Panc1 (cell line): ENCODE measurements at regions of chr17 and their contacts with region 1.

Region 1: GRCh38 chr17:63919311-63919723 is 678 bp upstream of the GH1 start:
- DNase-seq: peak; percentile 72
- ATAC-seq: peak; percentile 93
- H3K4me3 ChIP-seq: no peak overlapping the region
- H3K27ac ChIP-seq: no peak overlapping the region
- H3K4me1 ChIP-seq: no peaks in the 10 kb centered on the region
- H3K27me3 ChIP-seq: no peaks in the 10 kb centered on the region
- CTCF ChIP-seq: peak; percentile 86

Region 2: DNA sequence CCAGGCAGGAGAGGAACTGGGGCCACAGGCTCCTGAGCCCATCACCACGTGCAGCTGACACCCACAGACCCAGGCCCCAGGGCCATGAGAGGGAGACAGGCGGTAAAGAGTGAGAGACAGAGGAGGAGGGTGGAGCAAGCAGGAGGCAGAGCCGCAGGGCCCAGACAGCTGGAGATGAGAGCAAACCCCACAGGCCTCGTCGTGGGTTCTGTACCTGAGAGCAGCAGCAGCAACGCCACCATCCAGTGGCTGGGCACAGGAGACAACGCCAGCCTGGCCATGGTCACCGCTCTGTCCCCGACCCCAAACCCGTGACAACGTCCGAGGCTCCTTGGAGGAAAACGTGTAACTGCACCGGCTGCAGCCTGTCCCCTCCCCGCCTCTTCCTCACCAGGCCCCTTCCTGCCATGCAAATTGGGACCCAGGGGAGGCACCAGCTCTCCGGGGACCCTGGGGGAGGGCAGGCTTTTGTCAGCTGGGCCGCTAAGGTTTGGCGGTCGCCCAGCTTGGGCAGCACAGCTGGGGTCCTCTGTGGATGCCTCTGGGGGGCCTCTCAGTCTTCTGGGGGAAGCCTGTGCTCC is 12.8 kb after region 1 on chr17 and contains the start of gene CD79B:
- CTCF ChIA-PET with region 1: interaction called, 5 read pairs
- POLR2A ChIA-PET with region 1: interaction called, 10 read pairs
- in situ Hi-C with region 1: no loop called
- intact Hi-C with region 1: no loop called
- DNase-seq: no peak
- ATAC-seq: no peak
- H3K4me3 ChIP-seq: no peak within 1 kb of the TSS
- H3K27ac ChIP-seq: no peak within 1 kb of the TSS
- H3K4me1 ChIP-seq: no peaks in the 10 kb centered on the region
- H3K27me3 ChIP-seq: no peaks in the 10 kb centered on the region
- CTCF ChIP-seq: no peak
- total RNA-seq, gene CD79B: not detected

Region 3: DNA sequence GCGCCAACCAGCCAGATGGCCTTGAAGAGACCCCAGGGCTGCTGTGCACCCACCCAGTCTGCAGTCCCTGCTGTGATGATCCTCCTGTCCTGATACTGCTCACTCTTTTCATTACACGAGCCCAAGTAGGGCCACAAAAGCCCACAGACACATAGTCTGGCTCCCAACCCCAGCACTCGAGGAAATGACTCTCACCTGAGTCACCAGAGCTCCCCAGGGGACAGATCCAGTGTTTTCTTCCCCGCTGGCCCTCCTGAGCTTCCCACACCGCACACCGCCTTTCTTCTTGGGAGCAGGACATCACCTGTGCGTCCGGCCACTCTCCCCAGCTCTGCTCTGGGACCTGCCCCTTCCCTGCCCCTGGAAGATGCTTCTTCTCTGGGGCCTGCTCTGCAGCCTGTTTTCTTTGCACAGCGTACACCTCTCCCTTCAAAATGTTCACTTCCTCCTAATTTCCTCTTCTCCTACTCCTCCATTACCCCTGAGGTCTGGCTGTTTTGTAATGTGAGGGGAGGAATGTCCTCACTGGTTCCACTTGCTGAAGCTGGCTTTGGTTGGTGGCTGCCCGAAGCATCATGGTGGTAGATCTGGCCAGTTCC is 55.4 kb after region 1 on chr17:
- CTCF ChIA-PET with region 1: interaction called, 12 read pairs
- POLR2A ChIA-PET with region 1: no interaction called
- in situ Hi-C with region 1: no loop called
- intact Hi-C with region 1: no loop called
- DNase-seq: no peak
- ATAC-seq: peak; percentile 92
- H3K4me3 ChIP-seq: no peak overlapping the region
- H3K27ac ChIP-seq: no peak overlapping the region
- H3K4me1 ChIP-seq: peaks cover 4% of the 10 kb centered on the region; the same call in 1 of the 2 replicates
- H3K27me3 ChIP-seq: no peaks in the 10 kb centered on the region
- CTCF ChIP-seq: no peak

Region 4: GRCh38 chr17:63998050-63998720 is 78.9 kb after region 1 on chr17 and contains the start of gene PRR29:
- CTCF ChIA-PET with region 1: no interaction called
- POLR2A ChIA-PET with region 1: no interaction called
- in situ Hi-C with region 1: no loop called
- intact Hi-C with region 1: loop called (anchors 10 kb)
- DNase-seq: no peak
- ATAC-seq: peak; percentile 87
- H3K4me3 ChIP-seq: peak within 1 kb of the TSS; percentile 52 to 59
- H3K27ac ChIP-seq: no peak within 1 kb of the TSS
- H3K4me1 ChIP-seq: no peaks in the 10 kb centered on the region
- H3K27me3 ChIP-seq: peaks cover 3% of the 10 kb centered on the region; the same call in 1 of the 2 replicates
- CTCF ChIP-seq: no peak
- total RNA-seq, gene PRR29: 0.10 TPM

Region 5: DNA sequence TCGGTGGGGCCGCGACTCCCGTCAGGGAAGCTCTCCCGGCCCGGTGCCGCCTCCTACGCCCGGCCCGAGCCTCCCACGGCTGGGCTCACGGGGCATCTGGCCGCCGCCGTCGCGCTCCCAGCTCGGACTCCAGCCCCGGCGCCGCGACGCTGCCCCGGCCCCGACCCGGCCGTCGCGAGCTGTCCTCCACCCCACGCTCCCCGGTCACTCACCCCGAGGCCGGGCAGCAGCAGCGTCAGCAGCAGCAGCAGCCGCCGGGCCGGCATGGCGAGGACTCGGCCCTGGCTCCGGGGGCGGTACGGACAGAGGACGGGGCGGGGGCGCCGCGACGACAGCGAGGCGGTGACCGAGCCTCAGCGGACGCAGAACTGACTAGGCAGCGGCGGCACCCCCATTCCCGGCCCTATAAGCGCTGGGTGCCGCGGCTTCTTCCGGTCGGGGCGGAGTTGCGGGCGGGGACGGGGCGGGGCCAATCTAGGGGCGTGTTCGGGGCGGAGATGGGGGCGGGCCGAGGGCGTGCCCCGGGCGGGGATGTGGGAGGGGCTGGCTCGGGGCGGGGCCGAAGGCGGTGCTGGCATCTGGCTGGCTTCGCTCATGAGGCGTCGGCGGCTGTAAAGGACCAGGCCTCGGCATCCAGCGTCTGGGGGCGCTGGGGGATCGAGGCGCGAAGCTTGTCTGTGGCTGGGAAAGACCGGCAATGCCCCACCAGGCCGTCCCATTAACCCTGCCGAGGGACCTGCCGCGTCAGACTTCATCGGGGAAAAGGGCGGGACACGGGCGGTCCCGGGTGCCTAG is 210.6 kb after region 1 on chr17 and contains the start of gene ERN1:
- CTCF ChIA-PET with region 1: interaction called, 4 read pairs
- POLR2A ChIA-PET with region 1: no interaction called
- in situ Hi-C with region 1: no loop called
- intact Hi-C with region 1: loop called (anchors 10 kb)
- DNase-seq: no peak
- ATAC-seq: peak; percentile 96
- H3K4me3 ChIP-seq: peak within 1 kb of the TSS; percentile 77 to 80
- H3K27ac ChIP-seq: peak within 1 kb of the TSS; percentile 79
- H3K4me1 ChIP-seq: peaks cover 6% of the 10 kb centered on the region; the same call in 1 of the 2 replicates
- H3K27me3 ChIP-seq: no peaks in the 10 kb centered on the region
- CTCF ChIP-seq: no peak
- total RNA-seq, gene ERN1: 12.1 TPM